Activated T-helper 1 cell treated with anti-CD3 and anti-CD28 coated beads, Interleukin-12 subunit alpha, Interleukin-12 subunit beta, Interleukin-2, Interleukin-4 antibody, amounts not matched to agents 30 ng/mL and 10 ng/mL and 1 ng/mL, durations not matched to agents 14 hours and 24 hours and 36 hours (primary cell): ENCODE measurements at regions of chr2 and their contacts with region 1.

Region 1: GRCh38 chr2:217231212-217231611 is 371.3 kb upstream of the TNP1 start:
- DNase-seq: no peak
- H3K4me3 Mint-ChIP-seq: no peak overlapping the region
- H3K27ac Mint-ChIP-seq: no peak overlapping the region
- H3K4me1 Mint-ChIP-seq: peaks cover 6% of the 10 kb centered on the region
- H3K27me3 Mint-ChIP-seq: peaks cover 13% of the 10 kb centered on the region

Region 2: GRCh38 chr2:217138284-217138683 is 92.9 kb before region 1 on chr2:
- intact Hi-C with region 1: no loop called
- DNase-seq: no peak
- H3K4me3 Mint-ChIP-seq: no peak overlapping the region
- H3K27ac Mint-ChIP-seq: no peak overlapping the region
- H3K4me1 Mint-ChIP-seq: no peaks in the 10 kb centered on the region
- H3K27me3 Mint-ChIP-seq: peaks cover 13% of the 10 kb centered on the region

Region 3: GRCh38 chr2:217204358-217204757 is 26.9 kb before region 1 on chr2:
- intact Hi-C with region 1: loop called (anchors 5 kb)
- DNase-seq: no peak
- H3K4me3 Mint-ChIP-seq: no peak overlapping the region
- H3K27ac Mint-ChIP-seq: no peak overlapping the region
- H3K4me1 Mint-ChIP-seq: no peaks in the 10 kb centered on the region
- H3K27me3 Mint-ChIP-seq: peaks cover 31% of the 10 kb centered on the region

Region 4: GRCh38 chr2:217215877-217216276 is 15.3 kb before region 1 on chr2:
- intact Hi-C with region 1: no loop called
- DNase-seq: no peak
- H3K4me3 Mint-ChIP-seq: no peak overlapping the region
- H3K27ac Mint-ChIP-seq: no peak overlapping the region
- H3K4me1 Mint-ChIP-seq: peaks cover 26% of the 10 kb centered on the region
- H3K27me3 Mint-ChIP-seq: peaks cover 4% of the 10 kb centered on the region